Stomach (tissue), 19 donors: ENCODE measurements at regions of chr12 and their contacts with region 1.

Region 1: GRCh38 chr12:6280053-6280469 is 30.4 kb upstream of the PLEKHG6 start:
- DNase-seq: peak; percentile 67 to 81
- H3K4me3 ChIP-seq: no peak overlapping the region
- H3K27ac ChIP-seq: peak overlapping the region; percentile 62 to 96 (median 92)
- H3K4me1 ChIP-seq: peaks cover 32 to 46% (median 41%) of the 10 kb centered on the region in 4 donors
- H3K27me3 ChIP-seq: no peaks in the 10 kb centered on the region
- CTCF ChIP-seq: no peak
- EP300 ChIP-seq: no peak
- POLR2A ChIP-seq: no peak

Region 2: DNA sequence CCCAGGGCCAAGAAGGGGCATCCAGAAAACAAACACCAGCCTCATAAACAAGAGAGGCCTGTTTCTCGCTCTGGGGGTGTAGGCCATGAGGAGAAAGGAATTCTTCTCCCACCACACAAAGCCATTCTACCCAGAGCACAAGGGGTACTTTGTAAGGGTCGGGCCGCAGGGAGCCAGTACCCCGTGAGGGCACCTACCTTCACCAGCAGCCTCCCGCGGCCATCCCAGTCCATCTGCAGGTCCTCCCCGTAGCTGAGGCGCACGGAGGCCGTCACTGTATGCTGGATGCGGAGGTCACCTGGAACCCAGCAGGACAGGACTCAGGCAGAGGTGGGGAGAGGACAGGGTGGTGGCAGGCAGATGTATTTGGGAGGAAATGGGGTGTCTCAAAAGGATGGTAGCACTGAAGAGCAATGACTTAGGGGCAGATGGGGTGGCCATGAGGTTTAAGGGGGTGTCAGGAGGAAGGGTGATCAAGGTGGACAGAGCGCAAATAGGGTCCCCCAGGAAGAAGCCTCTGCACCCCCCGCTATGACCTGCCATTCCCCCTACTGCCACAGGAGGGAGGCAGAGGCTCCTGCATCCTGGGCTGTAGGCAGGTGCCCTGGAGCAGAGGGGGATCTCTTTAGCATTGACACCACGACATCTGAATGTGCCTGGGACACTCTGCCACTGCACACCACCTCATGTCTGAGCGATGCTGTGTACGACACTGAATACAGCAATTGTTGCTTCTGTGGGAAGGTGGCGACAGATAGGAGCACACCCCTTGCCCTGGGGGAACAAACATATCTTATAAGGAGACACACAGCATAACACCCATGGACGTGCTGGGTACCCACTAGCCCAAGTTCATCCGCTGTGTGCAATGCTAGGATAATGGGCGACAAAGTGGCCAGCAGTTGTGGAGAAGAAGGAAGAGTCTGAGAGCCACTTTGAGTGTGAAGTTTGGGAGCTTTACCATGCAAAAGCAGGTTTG is 217.0 kb before region 1 on chr12:
- intact Hi-C with region 1: loop called (anchors 5 kb)
- DNase-seq: peak; percentile 53 to 81
- H3K4me3 ChIP-seq: no peak overlapping the region
- H3K27ac ChIP-seq: no peak overlapping the region
- H3K4me1 ChIP-seq: peaks cover 0 to 8% (median 4%) of the 10 kb centered on the region in 4 donors
- H3K27me3 ChIP-seq: peaks cover 0 to 8% (median 0%) of the 10 kb centered on the region in 3 donors
- CTCF ChIP-seq: peak in 6 of 7 experiments; percentile 3 to 90 (median 84)
- EP300 ChIP-seq: no peak
- POLR2A ChIP-seq: no peak

Region 3: GRCh38 chr12:6195665-6196535 is 84.2 kb before region 1 on chr12:
- intact Hi-C with region 1: loop called (anchors 5 kb)
- DNase-seq: peak; percentile 91 to 95
- H3K4me3 ChIP-seq: no peak overlapping the region
- H3K27ac ChIP-seq: peak overlapping the region; percentile 25 to 72 (median 58)
- H3K4me1 ChIP-seq: peaks cover 13 to 52% (median 33%) of the 10 kb centered on the region in 4 donors
- H3K27me3 ChIP-seq: peaks cover 0 to 8% (median 4%) of the 10 kb centered on the region in 3 donors
- CTCF ChIP-seq: peak in 6 of 7 experiments; percentile 8 to 98 (median 92)
- EP300 ChIP-seq: no peak
- POLR2A ChIP-seq: no peak